GM12878 (cell line): ENCODE measurements at regions of chr2 and their contacts with region 1.

Region 1: GRCh38 chr2:99737537-99737936 is 247.7 kb upstream of the REV1 start:
- DNase-seq: no peak
- ATAC-seq: no peak
- H3K4me3 ChIP-seq: no peak overlapping the region
- H3K27ac ChIP-seq: no peak overlapping the region
- H3K4me1 ChIP-seq: no peaks in the 10 kb centered on the region
- H3K27me3 ChIP-seq: no peaks in the 10 kb centered on the region
- CTCF ChIP-seq: no peak
- EP300 ChIP-seq: no peak
- POLR2A ChIP-seq: no peak
- RAD21 ChIP-seq: no peak

Region 2: GRCh38 chr2:99754210-99754609 is 16.7 kb after region 1 on chr2:
- CTCF ChIA-PET with region 1: no interaction called
- POLR2A ChIA-PET with region 1: no interaction called
- RAD21 ChIA-PET with region 1: no interaction called
- SMC1A ChIA-PET with region 1: no interaction called
- in situ Hi-C with region 1: no loop called
- intact Hi-C with region 1: no loop called
- DNase-seq: no peak
- ATAC-seq: no peak
- H3K4me3 ChIP-seq: no peak overlapping the region
- H3K27ac ChIP-seq: no peak overlapping the region
- H3K4me1 ChIP-seq: no peaks in the 10 kb centered on the region
- H3K27me3 ChIP-seq: no peaks in the 10 kb centered on the region
- CTCF ChIP-seq: no peak
- EP300 ChIP-seq: no peak
- POLR2A ChIP-seq: no peak
- RAD21 ChIP-seq: no peak

Region 3: GRCh38 chr2:100967716-100968115 is 1230.2 kb after region 1 on chr2:
- CTCF ChIA-PET with region 1: no interaction called
- POLR2A ChIA-PET with region 1: interaction called, 12 read pairs
- RAD21 ChIA-PET with region 1: no interaction called
- SMC1A ChIA-PET with region 1: no interaction called
- in situ Hi-C with region 1: no loop called
- intact Hi-C with region 1: no loop called
- DNase-seq: no peak
- ATAC-seq: no peak
- H3K4me3 ChIP-seq: no peak overlapping the region
- H3K27ac ChIP-seq: no peak overlapping the region
- H3K4me1 ChIP-seq: no peaks in the 10 kb centered on the region
- H3K27me3 ChIP-seq: no peaks in the 10 kb centered on the region; a peak in 2 of 4 replicates
- CTCF ChIP-seq: no peak
- EP300 ChIP-seq: no peak
- POLR2A ChIP-seq: no peak
- RAD21 ChIP-seq: no peak